Sigmoid colon (tissue), 7 donors: ENCODE measurements at regions of chr12 and their contacts with region 1.

Region 1: DNA sequence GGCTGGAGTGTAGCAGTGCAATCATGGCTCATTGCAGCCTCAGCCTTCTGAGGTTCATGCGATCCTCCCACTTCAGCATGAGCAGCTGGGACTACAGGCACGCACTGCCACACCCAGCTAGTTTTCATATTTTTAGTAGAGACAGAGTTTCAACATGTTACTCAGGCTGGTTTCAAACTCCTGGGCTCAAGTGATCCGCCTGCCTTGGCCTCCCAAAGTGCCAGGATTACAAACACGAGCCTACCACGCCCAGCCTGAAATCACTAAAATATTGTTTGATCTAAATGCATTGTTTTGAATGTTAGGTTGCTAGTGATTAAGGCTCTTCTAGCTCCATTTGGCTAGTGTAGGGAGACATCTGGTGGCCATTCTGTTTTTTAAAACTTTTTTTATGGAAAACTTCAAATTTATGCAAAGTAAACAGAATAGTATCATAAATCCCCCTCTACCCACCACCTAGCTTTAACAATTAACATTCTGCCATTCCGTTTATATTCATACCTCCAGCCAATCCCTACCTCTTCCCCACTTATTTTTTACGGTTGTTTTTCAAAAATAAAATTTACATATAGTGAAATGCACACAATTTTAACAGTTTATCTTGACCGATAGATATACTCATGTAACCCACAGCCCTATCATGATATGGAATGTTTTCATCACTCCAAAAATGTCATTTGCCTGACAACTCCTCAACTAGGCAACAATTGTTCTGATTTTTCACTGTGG is 37.8 kb downstream of the MYO1H start:
- DNase-seq: no peak
- H3K4me3 ChIP-seq: peak overlapping the region in 1 of 4 donors; percentile 6
- H3K27ac ChIP-seq: peak overlapping the region in 3 of 4 donors; percentile 21 to 56 (median 50)
- H3K4me1 ChIP-seq: peaks cover 0 to 30% (median 20%) of the 10 kb centered on the region in 4 donors
- H3K27me3 ChIP-seq: no peaks in the 10 kb centered on the region
- CTCF ChIP-seq: peak; percentile 36 to 52 (median 43)
- EP300 ChIP-seq: no peak
- POLR2A ChIP-seq: no peak

Region 2: DNA sequence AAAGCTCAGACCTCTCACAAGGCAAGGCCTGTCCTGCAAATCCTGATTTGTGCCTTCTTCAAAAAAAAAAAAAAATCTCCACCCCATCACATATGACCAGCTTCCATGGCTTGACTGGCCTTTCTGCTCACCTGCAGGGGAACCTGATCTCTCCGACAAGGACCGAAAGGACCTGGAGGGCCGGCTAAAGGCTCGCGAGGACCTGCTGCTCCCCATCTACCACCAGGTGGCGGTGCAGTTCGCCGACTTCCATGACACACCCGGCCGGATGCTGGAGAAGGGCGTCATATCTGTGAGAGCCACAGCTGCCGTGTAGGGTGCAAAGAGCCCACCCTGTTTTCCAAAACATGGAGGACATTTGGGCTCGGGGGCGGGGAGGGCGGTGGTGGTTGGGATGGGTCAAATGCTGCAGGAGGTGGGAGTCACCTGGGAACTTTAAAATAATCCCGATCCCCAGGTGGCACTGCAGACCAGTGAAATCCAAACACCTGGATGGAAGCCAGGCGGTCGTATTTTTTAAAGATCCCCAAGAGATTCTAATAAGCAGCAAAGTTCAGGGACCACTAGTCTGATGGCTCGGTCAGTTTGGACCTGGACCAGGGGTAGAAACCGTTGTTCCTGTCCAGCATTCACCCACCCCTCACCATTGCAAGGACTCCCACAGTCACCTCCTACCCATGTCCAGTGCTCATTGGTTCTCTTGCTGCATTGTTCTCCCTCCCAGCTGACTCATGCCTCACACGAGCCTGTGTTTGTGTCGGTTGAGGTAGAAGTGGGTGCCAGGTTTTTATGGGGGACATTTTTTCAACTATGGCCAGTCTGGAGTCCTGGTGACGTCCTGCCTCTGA is 121.2 kb before region 1 on chr12:
- intact Hi-C with region 1: loop called (anchors 1 kb)
- DNase-seq: peak; percentile 90
- H3K4me3 ChIP-seq: no peak overlapping the region
- H3K27ac ChIP-seq: peak overlapping the region; percentile 46 to 61 (median 58)
- H3K4me1 ChIP-seq: peaks cover 0 to 28% (median 19%) of the 10 kb centered on the region in 4 donors
- H3K27me3 ChIP-seq: no peaks in the 10 kb centered on the region
- CTCF ChIP-seq: peak; percentile 73 to 93 (median 81)
- EP300 ChIP-seq: no peak
- POLR2A ChIP-seq: no peak